ENCODE measurements at regions of chr7 and their contacts with region 1.

Region 1: GRCh38 chr7:139259142-139259541 is 28.1 kb downstream of the UBN2 start:
- DNase-seq: no peak
- ATAC-seq: no peak
- H3K4me3 ChIP-seq: no peak overlapping the region
- H3K27ac ChIP-seq: no peak overlapping the region
- H3K4me1 ChIP-seq: peaks cover 2% of the 10 kb centered on the region; the same call in 1 of the 2 replicates
- H3K27me3 ChIP-seq: no peaks in the 10 kb centered on the region
- CTCF ChIP-seq: no peak
- POLR2A ChIP-seq: no peak
- RAD21 ChIP-seq: no peak

Region 2: GRCh38 chr7:139297795-139298194 is 38.7 kb after region 1 on chr7:
- CTCF ChIA-PET with region 1: no interaction called
- POLR2A ChIA-PET with region 1: no interaction called
- dilution Hi-C with region 1: no loop called
- in situ Hi-C with region 1: no loop called
- intact Hi-C with region 1: loop called (anchors 5 kb)
- DNase-seq: peak; percentile 2
- ATAC-seq: no peak
- H3K4me3 ChIP-seq: no peak overlapping the region
- H3K27ac ChIP-seq: no peak overlapping the region
- H3K4me1 ChIP-seq: 0 out of 2 replicates have a peak, but pooled peaks cover 2% of the 10 kb centered on the region
- H3K27me3 ChIP-seq: no peaks in the 10 kb centered on the region
- CTCF ChIP-seq: no peak
- POLR2A ChIP-seq: no peak
- RAD21 ChIP-seq: no peak

Measured in IMR-90 (cell line).